ENCODE measurements at regions of chr9 and their contacts with region 1.

Region 1: DNA sequence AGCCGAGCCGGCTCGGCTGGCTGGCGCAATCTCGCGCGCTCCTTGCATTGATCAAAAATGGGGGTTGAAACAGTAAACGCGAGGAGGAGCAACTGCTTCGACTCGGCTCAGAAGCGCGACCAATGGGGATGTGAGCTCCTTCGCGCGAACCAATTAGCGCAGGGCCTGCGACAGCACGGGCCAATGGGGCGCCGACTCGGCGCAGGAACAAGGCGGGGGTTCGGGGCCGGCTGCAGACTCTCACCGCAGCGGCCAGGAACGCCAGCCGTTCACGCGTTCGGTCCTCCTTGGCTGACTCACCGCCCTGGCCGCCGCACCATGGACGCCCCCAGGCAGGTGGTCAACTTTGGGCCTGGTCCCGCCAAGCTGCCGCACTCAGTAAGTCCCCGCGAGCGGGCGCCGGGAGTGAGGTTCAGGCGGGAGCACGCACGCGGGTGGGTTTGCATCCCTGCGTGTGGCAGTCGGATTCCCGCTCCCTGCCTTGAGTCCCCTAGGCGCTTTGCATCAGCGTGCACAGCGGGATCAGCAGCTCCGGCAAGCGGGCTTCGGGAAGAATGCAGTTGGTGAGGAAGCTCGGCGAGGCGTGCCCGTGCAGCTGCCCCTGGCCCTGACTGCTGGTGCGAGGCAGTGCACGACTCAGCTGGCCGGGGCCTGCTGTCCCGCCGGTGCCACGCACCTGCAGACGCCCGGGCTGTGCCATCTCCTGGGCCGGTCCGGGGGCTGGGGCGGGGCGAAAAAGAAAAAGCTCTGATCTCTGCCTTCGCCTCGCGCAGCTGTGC is at the start of gene PSAT1:
- DNase-seq: peak; percentile 96
- H3K4me3 ChIP-seq: peak within 1 kb of the TSS; percentile 91 to 96 (median 93)
- H3K27ac ChIP-seq: peak within 1 kb of the TSS; percentile 84
- H3K4me1 ChIP-seq: peaks cover 17% of the 10 kb centered on the region
- H3K27me3 ChIP-seq: no peaks in the 10 kb centered on the region
- CTCF ChIP-seq: peak in 1 of 2 donors; percentile 32
- total RNA-seq, gene PSAT1: 220 to 369 TPM

Region 2: GRCh38 chr9:78261403-78262001 is 35.6 kb before region 1 on chr9:
- CTCF ChIA-PET with region 1: interaction called, 4 read pairs
- dilution Hi-C with region 1: no loop called
- in situ Hi-C with region 1: no loop called
- intact Hi-C with region 1: loop called (anchors 1 kb)
- DNase-seq: peak; percentile 9
- H3K4me3 ChIP-seq: no peak overlapping the region
- H3K27ac ChIP-seq: no peak overlapping the region
- H3K4me1 ChIP-seq: no peaks in the 10 kb centered on the region
- H3K27me3 ChIP-seq: no peaks in the 10 kb centered on the region
- CTCF ChIP-seq: peak; percentile 54 to 61

Region 3: GRCh38 chr9:78278177-78278777 is 18.8 kb before region 1 on chr9:
- CTCF ChIA-PET with region 1: no interaction called
- dilution Hi-C with region 1: no loop called
- in situ Hi-C with region 1: no loop called
- intact Hi-C with region 1: loop called (anchors 1 kb)
- DNase-seq: peak; percentile 71
- H3K4me3 ChIP-seq: no peak overlapping the region
- H3K27ac ChIP-seq: no peak overlapping the region
- H3K4me1 ChIP-seq: peaks cover 9% of the 10 kb centered on the region
- H3K27me3 ChIP-seq: no peaks in the 10 kb centered on the region
- CTCF ChIP-seq: no peak

Region 4: GRCh38 chr9:78351816-78352215 is 54.7 kb after region 1 on chr9:
- CTCF ChIA-PET with region 1: no interaction called
- dilution Hi-C with region 1: no loop called
- in situ Hi-C with region 1: no loop called
- intact Hi-C with region 1: no loop called
- DNase-seq: no peak
- H3K4me3 ChIP-seq: no peak overlapping the region
- H3K27ac ChIP-seq: no peak overlapping the region
- H3K4me1 ChIP-seq: no peaks in the 10 kb centered on the region
- H3K27me3 ChIP-seq: no peaks in the 10 kb centered on the region
- CTCF ChIP-seq: no peak

Measured in mammary epithelial cell (primary cell).